ENCODE measurements at regions of chr15 and their contacts with region 1.

Region 1: GRCh38 chr15:60326824-60327654 is 70.7 kb downstream of the ANXA2 start:
- DNase-seq: peak; percentile 48
- H3K4me3 ChIP-seq: no peak overlapping the region
- H3K27ac ChIP-seq: no peak overlapping the region
- H3K4me1 ChIP-seq: peaks cover 3% of the 10 kb centered on the region
- H3K27me3 ChIP-seq: no peaks in the 10 kb centered on the region
- CTCF ChIP-seq: peak; percentile 82 to 91

Region 2: DNA sequence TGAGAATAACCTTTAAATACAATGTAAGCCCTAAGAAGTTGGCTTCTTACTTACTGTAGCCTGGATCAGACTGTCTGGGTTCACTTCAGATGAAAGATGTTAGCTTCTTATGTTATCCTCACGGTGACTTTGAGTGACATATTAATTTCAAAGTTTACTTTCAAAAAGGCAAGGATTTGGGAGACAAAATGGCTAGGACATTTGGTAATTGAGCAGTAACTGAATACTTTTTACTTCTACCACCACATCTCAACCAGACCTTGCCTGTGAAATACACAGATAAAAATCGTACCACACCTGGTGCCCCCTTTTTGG is 601.9 kb before region 1 on chr15:
- CTCF ChIA-PET with region 1: interaction called, 3 read pairs
- dilution Hi-C with region 1: loop called (anchors 5 kb)
- in situ Hi-C with region 1: loop called (anchors 5 to 25 kb)
- intact Hi-C with region 1: loop called (anchors 1 kb)
- DNase-seq: no peak
- H3K4me3 ChIP-seq: no peak overlapping the region
- H3K27ac ChIP-seq: no peak overlapping the region
- H3K4me1 ChIP-seq: peaks cover 6% of the 10 kb centered on the region
- H3K27me3 ChIP-seq: no peaks in the 10 kb centered on the region
- CTCF ChIP-seq: no peak

Region 3: GRCh38 chr15:59917504-59918157 is 409.4 kb before region 1 on chr15:
- CTCF ChIA-PET with region 1: no interaction called
- dilution Hi-C with region 1: no loop called
- in situ Hi-C with region 1: loop called in 1 of 2 experiments (anchors 5 kb)
- intact Hi-C with region 1: loop called (anchors 1 kb)
- DNase-seq: peak; percentile 60
- H3K4me3 ChIP-seq: no peak overlapping the region
- H3K27ac ChIP-seq: no peak overlapping the region
- H3K4me1 ChIP-seq: peaks cover 9% of the 10 kb centered on the region
- H3K27me3 ChIP-seq: no peaks in the 10 kb centered on the region
- CTCF ChIP-seq: peak; percentile 74 to 79

Region 4: GRCh38 chr15:60134609-60135008 is 192.4 kb before region 1 on chr15:
- CTCF ChIA-PET with region 1: interaction called, 3 read pairs
- dilution Hi-C with region 1: no loop called
- in situ Hi-C with region 1: no loop called
- intact Hi-C with region 1: loop called (anchors 2 kb)
- DNase-seq: no peak
- H3K4me3 ChIP-seq: no peak overlapping the region
- H3K27ac ChIP-seq: no peak overlapping the region
- H3K4me1 ChIP-seq: peaks cover 14% of the 10 kb centered on the region
- H3K27me3 ChIP-seq: no peaks in the 10 kb centered on the region
- CTCF ChIP-seq: peak; percentile 28 to 62

Region 5: GRCh38 chr15:60285741-60286140 is 41.3 kb before region 1 on chr15:
- CTCF ChIA-PET with region 1: no interaction called
- dilution Hi-C with region 1: no loop called
- in situ Hi-C with region 1: no loop called
- intact Hi-C with region 1: loop called (anchors 1 kb)
- DNase-seq: no peak
- H3K4me3 ChIP-seq: no peak overlapping the region
- H3K27ac ChIP-seq: no peak overlapping the region
- H3K4me1 ChIP-seq: no peaks in the 10 kb centered on the region
- H3K27me3 ChIP-seq: peaks cover 3% of the 10 kb centered on the region
- CTCF ChIP-seq: no peak

Region 6: DNA sequence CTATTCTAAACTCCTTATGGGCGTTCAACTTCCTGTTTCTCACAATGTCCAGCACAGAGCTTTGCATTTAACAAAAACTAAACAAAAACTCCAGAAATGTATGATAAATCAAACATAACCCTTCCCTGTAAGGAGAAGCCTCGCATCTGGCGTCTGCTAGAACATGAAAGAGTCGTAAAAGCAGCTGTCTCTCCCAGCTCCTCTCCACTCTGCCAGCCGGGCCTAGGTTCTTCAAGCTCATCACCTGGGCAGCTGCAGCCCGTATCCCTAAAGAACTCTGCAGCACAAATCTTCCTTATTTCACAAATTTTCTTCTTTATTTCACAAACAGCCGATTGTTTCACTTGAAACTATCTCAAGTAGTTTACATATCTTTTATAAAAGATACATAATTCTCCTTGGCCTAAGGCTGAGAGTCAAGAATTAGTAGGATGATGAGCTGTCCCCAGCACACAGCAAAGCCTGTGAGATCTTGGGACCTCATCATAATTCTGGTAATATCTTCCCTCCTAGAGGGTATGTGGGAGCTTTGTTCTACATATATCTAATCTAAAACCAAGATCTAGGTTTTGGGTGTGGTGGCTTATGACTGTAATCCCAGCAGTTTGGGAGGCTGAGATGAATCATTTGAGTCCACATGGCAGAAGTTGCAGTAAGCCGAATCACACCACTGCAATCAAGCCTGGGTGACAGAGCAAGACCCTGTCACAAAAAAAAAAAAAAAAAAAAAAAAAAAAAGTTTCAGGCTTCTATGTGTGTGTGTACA is 35.5 kb after region 1 on chr15:
- CTCF ChIA-PET with region 1: no interaction called
- dilution Hi-C with region 1: no loop called
- in situ Hi-C with region 1: no loop called
- intact Hi-C with region 1: no loop called
- DNase-seq: peak; percentile 77
- H3K4me3 ChIP-seq: no peak overlapping the region
- H3K27ac ChIP-seq: peak overlapping the region; percentile 73
- H3K4me1 ChIP-seq: peaks cover 19% of the 10 kb centered on the region
- H3K27me3 ChIP-seq: no peaks in the 10 kb centered on the region
- CTCF ChIP-seq: no peak

Region 7: DNA sequence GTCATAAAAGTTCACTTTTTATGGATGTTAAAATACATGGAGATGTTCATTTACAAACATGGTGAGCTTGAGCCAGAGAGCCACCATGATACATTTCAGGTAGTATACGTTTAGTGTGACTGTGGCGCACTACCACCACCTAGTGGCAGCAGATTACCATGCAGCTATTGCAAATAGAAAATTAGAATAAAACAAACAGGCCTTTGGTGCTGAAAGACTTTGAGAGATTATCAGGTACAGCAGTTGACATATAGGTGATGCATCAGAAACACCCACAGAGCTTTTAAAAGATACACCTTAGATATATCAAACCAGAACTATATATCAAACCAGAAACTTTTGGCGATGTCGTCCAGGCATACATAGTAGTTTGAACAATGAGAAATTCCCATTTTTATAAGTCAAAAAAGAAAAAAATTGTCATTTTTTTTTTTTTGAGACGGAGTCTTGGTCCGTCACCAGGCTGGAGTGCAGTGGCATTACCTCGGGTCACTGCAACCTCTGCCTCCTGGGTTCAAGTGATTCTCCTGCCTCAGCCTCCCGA is 193.9 kb after region 1 on chr15:
- CTCF ChIA-PET with region 1: no interaction called
- dilution Hi-C with region 1: no loop called
- in situ Hi-C with region 1: no loop called
- intact Hi-C with region 1: loop called (anchors 1 kb)
- DNase-seq: peak; percentile 72
- H3K4me3 ChIP-seq: no peak overlapping the region
- H3K27ac ChIP-seq: peak overlapping the region; percentile 89
- H3K4me1 ChIP-seq: peaks cover 39% of the 10 kb centered on the region
- H3K27me3 ChIP-seq: no peaks in the 10 kb centered on the region
- CTCF ChIP-seq: peak; percentile 87 to 97

Measured in mammary epithelial cell (primary cell).